ENCODE measurements at regions of chr5 and their contacts with region 1.

Region 1: GRCh38 chr5:139147483-139148087 is 50.6 kb downstream of the SIL1 start:
- DNase-seq: no peak
- CTCF ChIP-seq: no peak

Region 2: GRCh38 chr5:139164020-139164419 is 16.4 kb after region 1 on chr5:
- CTCF ChIA-PET with region 1: interaction called, 17 read pairs
- POLR2A ChIA-PET with region 1: no interaction called
- DNase-seq: no peak
- CTCF ChIP-seq: no peak

Region 3: GRCh38 chr5:139341650-139342422 is 194.3 kb after region 1 on chr5 and contains the start of gene PAIP2:
- CTCF ChIA-PET with region 1: no interaction called
- POLR2A ChIA-PET with region 1: no interaction called
- DNase-seq: peak; percentile 95
- CTCF ChIP-seq: peak; percentile 85

Measured in GM10248 (cell line).